ENCODE measurements at regions of chr2 and their contacts with region 1.

Region 1: DNA sequence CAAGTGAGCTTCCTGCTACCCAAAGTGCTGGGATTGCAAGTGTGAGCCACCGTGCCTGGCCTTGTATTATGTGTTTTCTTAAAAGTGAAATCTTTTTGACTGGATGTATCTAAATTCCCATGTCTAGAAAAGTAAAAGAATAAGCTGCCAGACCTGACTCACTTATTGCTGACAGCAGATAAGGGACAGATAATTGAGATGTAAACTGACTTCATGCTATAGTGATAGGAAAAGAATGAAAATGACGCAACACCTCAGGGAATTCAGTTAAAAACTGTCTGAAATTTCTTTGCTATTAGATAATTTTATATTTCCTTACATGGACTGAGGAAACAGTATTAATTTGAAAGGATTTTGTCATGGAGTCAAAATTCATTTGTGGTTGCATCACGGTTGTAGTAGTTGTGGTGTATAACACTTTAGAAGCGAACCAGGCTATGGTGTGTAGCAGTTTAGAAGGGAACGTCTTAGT is 19.4 kb downstream of the TTC27 start:
- DNase-seq: no peak
- H3K27ac ChIP-seq: no peak overlapping the region
- CTCF ChIP-seq: no peak

Region 2: GRCh38 chr2:32663864-32664263 is 16.6 kb after region 1 on chr2:
- CTCF ChIA-PET with region 1: no interaction called
- POLR2A ChIA-PET with region 1: no interaction called
- DNase-seq: no peak
- H3K27ac ChIP-seq: no peak overlapping the region
- CTCF ChIP-seq: no peak

Region 3: DNA sequence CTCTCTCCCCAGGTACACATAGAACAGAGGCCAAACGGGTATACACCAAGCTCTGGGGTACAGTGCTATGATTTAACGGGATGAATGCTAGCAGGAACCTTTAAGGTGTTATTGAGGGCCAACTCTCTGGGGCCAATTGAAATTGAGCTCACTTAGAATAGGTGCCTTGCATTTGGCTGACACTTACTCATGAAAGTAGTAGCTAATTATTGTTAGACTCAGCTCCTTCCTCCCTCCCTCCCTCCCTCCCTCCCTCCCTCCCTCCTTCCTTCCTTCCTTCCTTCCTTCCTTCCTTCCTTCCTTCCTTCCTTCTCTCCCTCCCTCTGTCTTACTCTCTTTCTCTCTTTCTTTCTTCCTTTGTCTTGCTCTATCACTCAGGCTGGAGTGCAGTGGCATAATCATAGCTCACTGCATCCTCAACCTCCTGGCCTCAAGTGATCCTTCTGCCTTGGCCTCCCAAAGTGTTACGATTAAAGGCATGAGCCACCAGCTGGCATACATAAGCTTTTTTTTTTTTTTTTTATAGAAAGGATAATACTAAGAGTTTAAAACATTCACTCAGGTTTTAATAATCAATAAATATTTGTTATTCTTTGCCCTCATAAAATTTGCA is 76.4 kb after region 1 on chr2:
- CTCF ChIA-PET with region 1: no interaction called
- POLR2A ChIA-PET with region 1: interaction called, 11 read pairs
- DNase-seq: no peak
- H3K27ac ChIP-seq: no peak overlapping the region
- CTCF ChIP-seq: no peak

Measured in RWPE1 (cell line).